GM12878 (cell line): ENCODE measurements at regions of chr1 and their contacts with region 1.

Region 1: DNA sequence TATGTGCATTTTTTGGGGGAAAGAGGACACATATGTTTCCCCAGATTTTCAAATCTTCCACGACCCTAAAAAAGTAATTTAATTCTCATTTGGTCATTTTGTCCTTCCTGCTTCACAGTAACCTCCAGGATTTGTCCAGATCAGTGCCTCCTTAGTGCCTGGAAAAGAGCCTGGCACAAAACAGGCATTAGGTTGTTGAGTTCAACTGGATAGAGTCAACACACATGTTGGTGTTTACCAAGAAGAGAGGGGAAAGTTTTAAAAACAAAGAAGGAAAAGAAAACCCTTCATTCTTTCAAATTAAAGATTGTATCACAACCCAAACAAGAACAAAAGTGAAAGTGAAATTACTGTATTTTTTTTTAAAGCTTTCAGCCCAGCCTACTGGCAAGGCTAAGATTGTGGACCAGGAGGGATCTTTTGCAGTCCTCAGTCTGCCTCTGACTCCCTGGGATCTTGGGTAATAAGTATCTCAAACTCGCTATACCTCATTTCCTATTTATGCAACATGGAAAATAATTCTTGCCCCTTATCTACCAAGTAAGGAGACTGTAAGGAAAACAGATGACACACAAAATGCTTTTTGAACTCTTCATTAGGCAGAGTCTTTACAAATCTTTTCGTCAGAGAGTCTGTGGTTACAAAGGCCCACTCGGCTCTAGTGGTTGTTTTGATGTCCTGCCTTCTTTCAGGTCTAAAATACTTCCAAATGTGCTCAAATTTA is 57.8 kb downstream of the ZNF281 start:
- DNase-seq: no peak
- ATAC-seq: peak; percentile 75
- H3K4me3 ChIP-seq: no peak overlapping the region; the same call in 1 of the 2 replicates
- H3K27ac ChIP-seq: peak overlapping the region; percentile 35; the same call in 1 of the 2 replicates
- H3K4me1 ChIP-seq: peaks cover 30% of the 10 kb centered on the region
- H3K27me3 ChIP-seq: no peaks in the 10 kb centered on the region
- CTCF ChIP-seq: no peak; a peak in 1 of 6 replicates
- EP300 ChIP-seq: no peak
- POLR2A ChIP-seq: no peak
- RAD21 ChIP-seq: no peak

Region 2: GRCh38 chr1:200005165-200005564 is 346.8 kb before region 1 on chr1:
- CTCF ChIA-PET with region 1: no interaction called
- POLR2A ChIA-PET with region 1: no interaction called
- RAD21 ChIA-PET with region 1: no interaction called
- SMC1A ChIA-PET with region 1: no interaction called
- in situ Hi-C with region 1: no loop called
- intact Hi-C with region 1: no loop called
- DNase-seq: no peak
- ATAC-seq: no peak
- H3K4me3 ChIP-seq: no peak overlapping the region
- H3K27ac ChIP-seq: no peak overlapping the region
- H3K4me1 ChIP-seq: no peaks in the 10 kb centered on the region
- H3K27me3 ChIP-seq: no peaks in the 10 kb centered on the region; a peak in 2 of 4 replicates
- CTCF ChIP-seq: no peak
- EP300 ChIP-seq: no peak
- POLR2A ChIP-seq: no peak
- RAD21 ChIP-seq: no peak

Region 3: DNA sequence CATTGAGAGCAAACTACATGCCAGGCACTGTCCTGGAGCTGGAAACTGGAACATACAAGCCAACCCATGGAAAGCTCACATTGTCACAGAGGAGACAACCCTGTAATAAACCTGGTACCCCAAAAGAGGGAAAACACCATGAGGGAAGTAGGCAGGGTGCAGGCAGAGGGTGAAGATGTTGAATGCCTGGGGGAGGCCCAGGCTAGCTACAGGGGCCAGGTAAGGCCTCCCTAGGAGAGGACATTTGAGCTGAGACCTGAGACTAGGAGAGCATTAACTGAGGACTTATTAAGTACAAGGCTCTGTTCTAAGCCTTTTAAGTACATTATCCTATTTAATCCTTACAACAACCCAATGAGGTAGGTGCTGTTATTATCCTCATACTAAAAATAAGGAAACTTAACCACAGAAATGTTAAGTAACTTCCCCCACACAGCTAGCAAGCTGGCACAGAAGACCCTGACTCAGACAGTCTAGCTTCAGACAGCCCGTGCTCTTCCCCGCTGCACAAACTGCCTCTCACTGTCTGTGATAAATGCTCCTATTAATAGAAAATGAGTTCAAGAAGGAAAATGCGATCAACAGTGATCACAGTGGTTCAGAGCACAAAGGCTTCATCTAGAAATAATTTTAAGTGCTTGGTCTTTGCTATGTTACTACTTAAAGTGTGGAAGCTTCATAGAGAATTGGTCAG is 16.0 kb after region 1 on chr1:
- CTCF ChIA-PET with region 1: interaction called, 11 read pairs
- POLR2A ChIA-PET with region 1: interaction called, 3 read pairs
- RAD21 ChIA-PET with region 1: no interaction called
- SMC1A ChIA-PET with region 1: interaction called, 8 read pairs
- in situ Hi-C with region 1: no loop called
- intact Hi-C with region 1: no loop called
- DNase-seq: no peak
- ATAC-seq: no peak
- H3K4me3 ChIP-seq: no peak overlapping the region
- H3K27ac ChIP-seq: no peak overlapping the region
- H3K4me1 ChIP-seq: 0 out of 2 replicates have a peak, but pooled peaks cover 3% of the 10 kb centered on the region
- H3K27me3 ChIP-seq: no peaks in the 10 kb centered on the region
- CTCF ChIP-seq: no peak
- EP300 ChIP-seq: no peak
- POLR2A ChIP-seq: no peak
- RAD21 ChIP-seq: no peak

Region 4: GRCh38 chr1:200409761-200410565 is 58.0 kb after region 1 on chr1 and contains the start of gene ZNF281:
- CTCF ChIA-PET with region 1: no interaction called
- POLR2A ChIA-PET with region 1: no interaction called
- RAD21 ChIA-PET with region 1: no interaction called
- SMC1A ChIA-PET with region 1: no interaction called
- in situ Hi-C with region 1: no loop called
- intact Hi-C with region 1: no loop called
- DNase-seq: peak; percentile 85
- ATAC-seq: peak; percentile 94
- H3K4me3 ChIP-seq: peak within 1 kb of the TSS; percentile 82
- H3K27ac ChIP-seq: peak within 1 kb of the TSS; percentile 91
- H3K4me1 ChIP-seq: peaks cover 18% of the 10 kb centered on the region
- H3K27me3 ChIP-seq: no peaks in the 10 kb centered on the region
- CTCF ChIP-seq: no peak
- EP300 ChIP-seq: no peak
- POLR2A ChIP-seq: peak; percentile 80
- RAD21 ChIP-seq: no peak
- polyA plus RNA-seq, gene ZNF281: 8.3 to 9.4 TPM